ENCODE measurements at regions of chr4 and their contacts with region 1.

Region 1: GRCh38 chr4:122577808-122578781 is 42.8 kb downstream of the IL21 start:
- DNase-seq: peak in 1 of 2 experiments; percentile 30
- H3K4me3 ChIP-seq: no peak overlapping the region
- H3K27ac ChIP-seq: no peak overlapping the region
- H3K4me1 ChIP-seq: no peaks in the 10 kb centered on the region
- H3K27me3 ChIP-seq: no peaks in the 10 kb centered on the region
- CTCF ChIP-seq: peak; percentile 78

Region 2: DNA sequence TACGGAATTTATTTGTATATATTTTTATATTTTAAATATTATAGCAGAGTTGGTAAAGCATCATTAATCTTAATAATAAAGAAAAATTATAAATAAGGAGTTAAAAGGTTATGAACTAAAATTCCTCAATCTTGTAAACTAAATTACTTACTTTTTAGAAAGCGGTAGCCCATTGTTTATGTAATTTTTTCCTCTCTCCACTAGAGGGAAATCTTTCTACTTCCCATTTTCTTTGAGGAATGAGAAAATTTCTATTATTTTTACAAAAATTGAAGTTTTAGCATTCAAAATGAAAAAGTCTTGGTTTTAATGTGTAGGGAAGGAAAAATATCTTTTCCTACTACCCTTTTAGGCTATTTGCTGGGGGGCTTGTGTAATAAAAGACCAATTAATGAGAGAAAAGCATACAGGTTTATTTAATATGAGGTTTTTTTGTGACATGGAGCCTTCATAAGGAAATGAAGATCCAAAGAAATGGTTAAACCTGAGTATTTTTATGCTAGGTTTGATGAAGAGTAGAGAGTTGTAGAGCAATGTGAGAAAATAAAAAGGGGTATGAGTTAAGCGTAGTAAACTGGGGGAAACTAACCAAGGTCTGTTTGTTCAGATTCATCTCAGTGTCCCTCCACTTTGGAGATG is 268.0 kb before region 1 on chr4:
- CTCF ChIA-PET with region 1: no interaction called
- POLR2A ChIA-PET with region 1: no interaction called
- intact Hi-C with region 1: loop called (anchors 2 kb)
- DNase-seq: no peak
- H3K4me3 ChIP-seq: no peak overlapping the region
- H3K27ac ChIP-seq: no peak overlapping the region
- H3K4me1 ChIP-seq: 0 out of 2 replicates have a peak, but pooled peaks cover 3% of the 10 kb centered on the region
- H3K27me3 ChIP-seq: no peaks in the 10 kb centered on the region
- CTCF ChIP-seq: peak; percentile 78

Region 3: GRCh38 chr4:122508083-122508482 is 70.0 kb before region 1 on chr4:
- CTCF ChIA-PET with region 1: no interaction called
- POLR2A ChIA-PET with region 1: no interaction called
- intact Hi-C with region 1: no loop called
- DNase-seq: no peak
- H3K4me3 ChIP-seq: no peak overlapping the region
- H3K27ac ChIP-seq: no peak overlapping the region
- H3K4me1 ChIP-seq: peaks cover 6% of the 10 kb centered on the region; the same call in 1 of the 2 replicates
- H3K27me3 ChIP-seq: no peaks in the 10 kb centered on the region
- CTCF ChIP-seq: no peak

Region 4: DNA sequence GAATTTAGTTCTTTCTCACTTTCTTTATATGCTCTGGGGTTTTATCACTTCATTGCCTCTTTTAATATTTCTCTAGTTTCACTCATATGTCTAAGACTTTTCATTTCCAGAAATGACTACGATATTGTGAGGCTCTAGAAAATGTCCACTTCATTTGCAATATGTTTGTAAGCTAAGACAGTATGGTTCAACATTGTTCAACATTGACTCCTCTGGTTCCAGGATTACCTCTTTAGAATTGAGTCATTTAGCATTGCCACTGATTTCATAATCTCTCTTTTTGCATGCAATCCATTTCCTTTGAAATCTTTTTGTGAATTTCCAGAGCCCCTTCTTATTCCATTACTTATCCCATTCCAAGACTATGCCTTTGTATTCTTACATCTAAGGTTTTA is 186.7 kb after region 1 on chr4:
- CTCF ChIA-PET with region 1: no interaction called
- POLR2A ChIA-PET with region 1: no interaction called
- intact Hi-C with region 1: no loop called
- DNase-seq: no peak
- H3K4me3 ChIP-seq: no peak overlapping the region
- H3K27ac ChIP-seq: no peak overlapping the region; the same call in 1 of the 2 replicates
- H3K4me1 ChIP-seq: 0 out of 2 replicates have a peak, but pooled peaks cover 14% of the 10 kb centered on the region
- H3K27me3 ChIP-seq: no peaks in the 10 kb centered on the region
- CTCF ChIP-seq: no peak

Measured in PC-9 (cell line).